Uterus (tissue), 4 donors: ENCODE measurements at regions of chr6 and their contacts with region 1.

Region 1: GRCh38 chr6:125114248-125114858 is 39.2 kb upstream of the TPD52L1 start:
- DNase-seq: peak; percentile 28 to 60
- H3K4me3 ChIP-seq: no peak overlapping the region
- H3K27ac ChIP-seq: no peak overlapping the region
- H3K4me1 ChIP-seq: no peaks in the 10 kb centered on the region
- H3K27me3 ChIP-seq: no peaks in the 10 kb centered on the region
- CTCF ChIP-seq: peak; percentile 69 to 88 (median 81)
- POLR2A ChIP-seq: no peak

Region 2: DNA sequence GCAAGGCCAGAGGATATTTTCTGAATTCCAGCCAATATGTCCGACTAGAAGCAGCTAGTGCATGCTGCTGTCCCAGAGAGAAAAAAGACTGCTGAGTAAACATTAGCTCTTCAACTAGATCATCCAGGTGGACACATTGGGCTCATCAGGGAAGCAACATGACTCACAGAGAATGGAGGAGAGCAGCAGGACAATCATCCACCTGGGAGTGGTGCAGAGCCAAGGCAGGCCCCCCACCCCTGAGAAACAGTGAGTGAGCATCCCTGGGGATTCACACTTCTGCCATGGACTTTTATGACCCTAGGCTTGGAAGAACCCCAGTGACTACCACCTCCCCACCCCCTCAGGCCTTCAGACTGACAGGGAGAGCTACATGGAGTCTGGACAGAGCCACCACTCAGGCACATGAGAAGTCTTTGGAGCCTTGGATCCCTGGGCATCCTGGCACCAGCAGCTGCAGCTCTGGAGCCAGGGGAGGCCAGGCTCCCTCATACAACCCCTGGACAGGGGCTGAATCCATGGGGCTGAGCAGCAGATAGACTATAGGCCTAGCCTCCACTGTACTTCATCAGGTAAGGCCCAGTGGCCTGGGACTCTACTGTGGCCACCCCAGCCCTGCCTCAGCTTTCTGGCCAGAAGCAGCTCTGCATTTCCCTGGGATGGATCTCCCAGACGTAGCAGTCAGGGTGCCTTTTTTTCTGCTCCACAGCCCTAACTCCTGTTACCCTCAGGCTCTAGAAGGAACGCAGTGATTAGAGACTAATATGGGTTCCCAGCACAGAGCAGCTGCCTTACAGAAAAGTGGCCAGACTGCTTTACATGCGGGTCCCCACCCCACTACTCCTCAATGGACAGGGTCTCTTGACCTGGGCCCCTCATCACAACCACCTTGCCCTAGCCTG is 235.0 kb before region 1 on chr6:
- intact Hi-C with region 1: loop called (anchors 5 kb)
- DNase-seq: no peak
- H3K4me3 ChIP-seq: no peak overlapping the region
- H3K27ac ChIP-seq: no peak overlapping the region
- H3K4me1 ChIP-seq: no peaks in the 10 kb centered on the region
- H3K27me3 ChIP-seq: no peaks in the 10 kb centered on the region
- CTCF ChIP-seq: no peak
- POLR2A ChIP-seq: no peak

Region 3: GRCh38 chr6:125077444-125077843 is 36.9 kb before region 1 on chr6:
- intact Hi-C with region 1: no loop called
- DNase-seq: no peak
- H3K4me3 ChIP-seq: no peak overlapping the region
- H3K27ac ChIP-seq: no peak overlapping the region
- H3K4me1 ChIP-seq: no peaks in the 10 kb centered on the region
- H3K27me3 ChIP-seq: no peaks in the 10 kb centered on the region
- CTCF ChIP-seq: no peak
- POLR2A ChIP-seq: no peak

Region 4: DNA sequence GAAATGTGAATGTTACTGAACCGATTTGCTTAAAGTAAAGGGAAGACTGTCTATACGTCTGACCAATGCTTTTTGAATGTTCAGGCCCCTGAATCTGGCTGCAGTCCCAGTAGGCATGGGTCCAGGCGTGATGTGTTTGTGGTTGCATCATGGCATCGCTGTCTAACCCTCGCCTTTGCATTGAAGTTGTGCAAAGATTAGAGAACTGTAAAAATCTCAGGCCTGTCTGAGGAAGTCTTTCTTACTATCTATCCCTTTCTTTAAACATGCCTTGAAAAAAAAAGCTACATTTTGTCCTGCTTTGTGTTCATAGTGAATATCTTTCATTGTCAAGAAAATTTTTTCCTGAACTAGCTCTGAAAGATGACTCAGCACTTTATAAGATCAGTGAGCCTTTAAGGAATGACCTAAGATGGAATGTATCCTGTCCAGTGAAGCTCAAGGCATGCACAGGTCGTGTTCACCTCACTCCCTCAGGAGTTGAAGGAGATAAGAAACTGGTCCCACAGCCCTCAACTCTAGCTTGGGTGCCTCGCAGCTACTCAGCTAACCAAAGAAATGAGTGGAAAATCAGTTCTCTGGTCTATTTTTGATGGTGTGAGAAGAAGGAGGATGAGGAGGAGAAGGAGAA is 87.7 kb after region 1 on chr6:
- intact Hi-C with region 1: no loop called
- DNase-seq: peak in 1 of 2 donors; percentile 20
- H3K4me3 ChIP-seq: no peak overlapping the region
- H3K27ac ChIP-seq: no peak overlapping the region
- H3K4me1 ChIP-seq: no peaks in the 10 kb centered on the region
- H3K27me3 ChIP-seq: no peaks in the 10 kb centered on the region
- CTCF ChIP-seq: no peak
- POLR2A ChIP-seq: no peak

Region 5: GRCh38 chr6:125357515-125358256 is 243.3 kb after region 1 on chr6:
- intact Hi-C with region 1: no loop called
- DNase-seq: no peak
- H3K4me3 ChIP-seq: no peak overlapping the region
- H3K27ac ChIP-seq: no peak overlapping the region
- H3K4me1 ChIP-seq: no peaks in the 10 kb centered on the region
- H3K27me3 ChIP-seq: no peaks in the 10 kb centered on the region
- CTCF ChIP-seq: no peak
- POLR2A ChIP-seq: no peak